ENCODE measurements at regions of chr22 and their contacts with region 1.

Region 1: GRCh38 chr22:35930933-35931332 is 97.7 kb downstream of the RBFOX2 start:
- DNase-seq: peak; percentile 35
- ATAC-seq: peak; percentile 91
- H3K4me3 ChIP-seq: no peak overlapping the region
- H3K27ac ChIP-seq: no peak overlapping the region
- H3K4me1 ChIP-seq: no peaks in the 10 kb centered on the region
- H3K27me3 ChIP-seq: no peaks in the 10 kb centered on the region
- CTCF ChIP-seq: peak; percentile 66

Region 2: DNA sequence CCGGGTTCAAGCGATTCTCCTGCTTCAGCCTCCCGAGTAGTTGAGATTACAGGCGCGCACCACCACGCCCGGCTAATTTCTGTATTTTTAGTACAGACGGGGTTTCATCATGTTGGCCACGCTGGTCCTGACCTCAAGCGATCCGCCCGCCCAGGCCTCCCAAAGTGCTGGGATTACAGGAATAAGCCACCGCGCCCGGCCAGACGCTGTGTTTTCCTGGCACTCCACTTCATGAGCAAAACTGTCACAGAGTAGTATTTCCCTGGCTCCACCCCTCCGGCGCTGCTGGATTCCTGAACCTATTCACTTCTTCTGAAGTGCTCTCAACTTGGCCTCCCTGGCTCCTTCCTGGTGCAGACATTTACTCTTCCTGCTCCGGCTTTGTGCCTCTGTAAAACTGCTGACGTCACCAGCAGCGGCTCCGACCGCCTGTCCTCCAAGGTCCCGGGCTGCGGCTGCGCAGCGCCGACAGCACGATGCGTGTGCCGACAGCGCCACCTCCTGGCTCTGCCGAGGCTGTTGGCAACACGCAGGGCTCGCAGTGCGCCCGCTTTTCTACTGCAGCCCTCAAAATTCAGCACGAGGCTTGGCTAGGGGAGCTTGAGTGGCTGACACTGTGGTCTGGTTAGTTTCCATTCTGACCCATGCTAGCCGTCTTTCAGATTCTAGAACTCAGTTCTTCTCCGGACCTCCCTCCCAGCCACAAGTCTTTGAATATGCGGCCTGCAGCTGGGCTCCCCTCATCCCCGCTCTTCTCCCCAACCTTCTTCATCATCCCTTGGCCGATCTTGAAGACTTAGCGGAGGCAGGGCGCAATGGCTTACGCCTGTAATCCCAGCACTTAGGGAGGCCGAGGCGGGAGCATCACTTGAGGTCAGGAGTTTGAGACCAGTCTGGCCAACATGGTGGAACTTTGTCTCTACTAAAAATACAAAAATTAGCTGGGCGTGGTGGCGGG is 193.0 kb after region 1 on chr22:
- CTCF ChIA-PET with region 1: interaction called, 4 read pairs
- POLR2A ChIA-PET with region 1: no interaction called
- in situ Hi-C with region 1: no loop called
- intact Hi-C with region 1: loop called (anchors 10 kb)
- DNase-seq: peak; percentile 52
- ATAC-seq: peak; percentile 95
- H3K4me3 ChIP-seq: peak overlapping the region; percentile 31 to 54
- H3K27ac ChIP-seq: peak overlapping the region; percentile 78
- H3K4me1 ChIP-seq: no peaks in the 10 kb centered on the region
- H3K27me3 ChIP-seq: no peaks in the 10 kb centered on the region; the same call in 1 of the 2 replicates
- CTCF ChIP-seq: peak; percentile 92